ENCODE measurements at regions of chr10 and their contacts with region 1.

Region 1: DNA sequence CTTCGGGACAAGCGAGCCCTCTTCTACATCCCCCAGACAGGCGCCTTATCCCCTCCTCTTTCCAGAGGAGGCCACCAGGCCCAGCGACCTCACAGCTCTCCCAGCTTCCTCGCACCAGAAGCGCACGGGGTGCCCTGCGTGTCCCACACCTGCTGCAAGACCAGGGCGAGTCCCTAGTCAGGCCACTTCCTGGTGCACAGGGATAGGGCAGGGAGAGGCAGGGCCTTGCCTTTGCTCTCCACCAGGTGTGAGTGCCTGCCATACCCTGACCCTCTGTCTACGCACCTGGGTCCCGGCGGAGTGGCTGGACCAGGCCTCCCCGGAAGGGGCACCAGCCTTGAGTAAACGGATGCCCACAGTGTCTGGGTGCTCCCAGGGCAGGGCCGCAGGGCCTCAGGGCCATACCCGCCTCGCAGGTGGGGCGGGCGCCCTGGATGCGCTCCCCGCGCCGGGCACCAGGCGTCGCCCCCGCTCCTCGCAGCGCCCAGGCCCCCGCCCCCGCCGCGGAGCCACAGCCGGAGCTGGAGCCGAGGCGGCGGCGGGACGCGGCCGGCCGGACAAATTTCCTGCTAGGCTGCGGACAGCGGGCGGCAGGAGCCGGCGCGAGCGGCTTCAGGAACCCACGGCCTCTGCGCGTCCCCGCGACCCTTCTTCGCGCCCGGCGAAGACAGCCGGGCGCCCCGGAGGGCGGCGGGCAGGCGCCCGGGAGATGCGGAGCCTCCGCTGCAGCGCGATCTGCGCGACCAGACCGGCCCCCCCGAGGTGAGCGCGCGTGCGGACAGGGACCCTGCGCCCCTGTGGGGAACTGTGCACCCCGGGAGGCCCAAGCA is at the start of gene PTPRE:
- DNase-seq: peak; percentile 72
- H3K4me3 ChIP-seq: peak within 1 kb of the TSS; percentile 63 to 64
- H3K27ac ChIP-seq: peak within 1 kb of the TSS; percentile 10 to 68
- H3K4me1 ChIP-seq: no peaks in the 10 kb centered on the region
- H3K27me3 ChIP-seq: no peaks in the 10 kb centered on the region
- CTCF ChIP-seq: peak; percentile 74 to 89 (median 79)
- POLR2A ChIP-seq: no peak
- total RNA-seq, gene PTPRE: 15.3 to 26.6 TPM

Region 2: DNA sequence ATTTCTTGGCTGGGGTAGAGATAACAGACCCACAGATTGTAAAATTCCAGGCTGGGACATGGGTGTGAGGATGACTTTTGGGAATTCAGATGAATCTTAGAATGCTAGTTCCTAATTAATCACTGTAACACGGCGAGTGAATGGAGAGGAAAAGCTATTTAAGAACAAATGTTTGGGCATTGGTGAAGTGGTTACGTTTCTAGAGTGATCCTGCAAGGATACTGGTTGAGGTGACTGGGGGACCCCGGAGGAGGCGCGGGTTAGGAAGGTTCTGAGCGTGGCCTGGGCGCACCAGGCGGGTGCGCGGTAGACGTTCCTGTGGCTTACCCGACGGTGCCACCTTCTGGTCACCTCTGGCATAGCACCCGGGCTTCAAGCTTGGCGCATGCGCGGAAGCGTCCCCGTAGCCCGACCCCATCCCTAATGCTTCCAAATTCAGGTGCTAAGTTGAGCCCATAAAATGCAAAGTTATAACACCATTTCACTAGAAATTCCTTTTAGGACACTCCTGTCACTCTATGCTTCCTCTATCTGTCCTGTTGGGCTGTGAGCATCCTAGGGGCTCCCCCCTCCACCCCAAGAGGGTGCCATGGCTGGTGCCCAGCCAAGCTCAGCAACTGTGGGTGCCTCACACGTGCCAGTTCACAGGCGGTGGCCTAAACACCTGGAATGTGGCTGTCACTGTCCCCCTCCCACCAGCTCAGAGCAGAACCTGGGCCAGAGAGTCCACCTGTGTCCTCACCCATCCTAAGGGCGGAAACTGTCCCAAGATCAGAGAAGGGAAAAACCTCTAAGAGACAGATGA is 104.6 kb after region 1 on chr10:
- intact Hi-C with region 1: loop called (anchors 5 kb)
- DNase-seq: peak; percentile 89
- H3K4me3 ChIP-seq: no peak overlapping the region
- H3K27ac ChIP-seq: no peak overlapping the region
- H3K4me1 ChIP-seq: peaks cover 12% of the 10 kb centered on the region
- H3K27me3 ChIP-seq: no peaks in the 10 kb centered on the region
- CTCF ChIP-seq: peak; percentile 95 to 98 (median 96)
- POLR2A ChIP-seq: no peak

Region 3: DNA sequence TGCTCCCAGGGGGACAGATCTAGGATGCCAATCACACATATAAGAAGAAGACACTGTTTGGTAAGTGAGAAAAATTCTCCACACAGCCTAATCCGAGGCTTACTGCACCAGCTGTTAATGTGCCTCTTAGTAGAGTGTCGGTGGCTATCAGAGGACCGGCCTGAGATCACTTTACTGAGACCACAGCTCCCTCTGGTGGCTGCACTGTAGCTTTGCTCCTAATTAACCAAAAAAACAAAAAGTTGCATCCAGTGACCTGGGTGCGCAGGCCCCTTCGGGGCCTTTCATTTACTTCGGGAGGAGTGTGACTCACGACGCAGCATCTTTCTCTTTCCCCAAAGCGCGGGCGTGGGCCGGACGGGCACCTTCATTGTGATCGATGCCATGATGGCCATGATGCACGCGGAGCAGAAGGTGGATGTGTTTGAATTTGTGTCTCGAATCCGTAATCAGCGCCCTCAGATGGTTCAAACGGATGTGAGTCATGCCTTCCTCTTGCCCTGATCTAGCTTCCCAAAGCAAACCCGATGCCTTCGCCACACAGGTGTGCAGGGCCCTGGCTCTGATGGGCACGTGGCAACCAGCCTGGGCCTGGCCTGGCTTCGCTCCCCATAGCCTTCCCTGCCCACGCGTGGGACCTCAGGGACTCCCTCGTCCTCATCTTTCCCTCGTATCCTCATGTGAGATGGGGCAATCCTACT is 162.7 kb after region 1 on chr10:
- intact Hi-C with region 1: loop called (anchors 10 kb)
- DNase-seq: peak; percentile 74
- H3K4me3 ChIP-seq: no peak overlapping the region
- H3K27ac ChIP-seq: no peak overlapping the region
- H3K4me1 ChIP-seq: no peaks in the 10 kb centered on the region
- H3K27me3 ChIP-seq: no peaks in the 10 kb centered on the region
- CTCF ChIP-seq: peak; percentile 81 to 83 (median 82)
- POLR2A ChIP-seq: no peak